Transverse colon (tissue), 4 donors: ENCODE measurements at regions of chr11 and their contacts with region 1.

Region 1: GRCh38 chr11:11496879-11497278 is 124.9 kb downstream of the GALNT18 start:
- DNase-seq: no peak
- H3K4me3 ChIP-seq: no peak overlapping the region
- H3K27ac ChIP-seq: no peak overlapping the region
- H3K4me1 ChIP-seq: peaks cover 4 to 8% (median 6%) of the 10 kb centered on the region in 4 donors
- H3K27me3 ChIP-seq: no peaks in the 10 kb centered on the region
- CTCF ChIP-seq: no peak
- EP300 ChIP-seq: no peak
- POLR2A ChIP-seq: no peak

Region 2: DNA sequence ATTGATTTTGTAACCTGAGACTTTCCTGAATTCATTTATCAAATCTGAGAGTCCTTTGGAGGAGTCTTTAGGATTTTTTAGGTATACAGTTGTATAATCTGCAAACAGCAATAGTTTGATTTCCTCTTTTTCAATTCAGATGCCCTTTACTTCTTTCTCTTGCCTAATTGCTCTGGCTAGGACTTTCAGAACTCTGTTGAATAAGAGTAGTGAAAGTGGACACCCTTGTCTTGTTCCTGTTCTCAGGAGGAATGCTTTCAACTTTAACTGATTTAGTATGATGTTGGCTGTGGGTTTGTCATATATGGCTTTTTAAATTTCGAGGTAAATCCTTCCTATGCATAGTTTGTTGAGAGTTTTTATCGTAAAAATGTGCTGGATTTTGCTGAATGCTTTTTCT is 371.3 kb before region 1 on chr11:
- in situ Hi-C with region 1: no loop called
- intact Hi-C with region 1: no loop called
- DNase-seq: no peak
- H3K4me3 ChIP-seq: no peak overlapping the region
- H3K27ac ChIP-seq: no peak overlapping the region
- H3K4me1 ChIP-seq: no peaks in the 10 kb centered on the region
- H3K27me3 ChIP-seq: no peaks in the 10 kb centered on the region
- CTCF ChIP-seq: no peak
- EP300 ChIP-seq: no peak
- POLR2A ChIP-seq: no peak

Region 3: GRCh38 chr11:11476971-11477645 is 19.8 kb before region 1 on chr11:
- in situ Hi-C with region 1: no loop called
- intact Hi-C with region 1: loop called (anchors 1 kb)
- DNase-seq: no peak
- H3K4me3 ChIP-seq: no peak overlapping the region
- H3K27ac ChIP-seq: no peak overlapping the region
- H3K4me1 ChIP-seq: no peaks in the 10 kb centered on the region
- H3K27me3 ChIP-seq: no peaks in the 10 kb centered on the region
- CTCF ChIP-seq: no peak
- EP300 ChIP-seq: no peak
- POLR2A ChIP-seq: no peak